Gastrocnemius medialis (tissue), 4 donors: ENCODE measurements at regions of chr1 and their contacts with region 1.

Region 1: GRCh38 chr1:179930879-179931278 is 23.7 kb upstream of the CEP350 start:
- DNase-seq: no peak
- ATAC-seq: no peak
- H3K4me3 ChIP-seq: no peak overlapping the region
- H3K27ac ChIP-seq: no peak overlapping the region
- H3K4me1 ChIP-seq: no peaks in the 10 kb centered on the region
- H3K27me3 ChIP-seq: no peaks in the 10 kb centered on the region
- CTCF ChIP-seq: no peak
- POLR2A ChIP-seq: no peak

Region 2: GRCh38 chr1:179823693-179824092 is 107.2 kb before region 1 on chr1:
- in situ Hi-C with region 1: no loop called
- intact Hi-C with region 1: loop called (anchors 2 kb)
- DNase-seq: no peak
- ATAC-seq: no peak
- H3K4me3 ChIP-seq: no peak overlapping the region
- H3K27ac ChIP-seq: no peak overlapping the region
- H3K4me1 ChIP-seq: peaks cover 0 to 6% of the 10 kb centered on the region in 2 donors
- H3K27me3 ChIP-seq: no peaks in the 10 kb centered on the region
- CTCF ChIP-seq: no peak
- POLR2A ChIP-seq: no peak